ENCODE measurements at regions of chr12 and their contacts with region 1.

Region 1: DNA sequence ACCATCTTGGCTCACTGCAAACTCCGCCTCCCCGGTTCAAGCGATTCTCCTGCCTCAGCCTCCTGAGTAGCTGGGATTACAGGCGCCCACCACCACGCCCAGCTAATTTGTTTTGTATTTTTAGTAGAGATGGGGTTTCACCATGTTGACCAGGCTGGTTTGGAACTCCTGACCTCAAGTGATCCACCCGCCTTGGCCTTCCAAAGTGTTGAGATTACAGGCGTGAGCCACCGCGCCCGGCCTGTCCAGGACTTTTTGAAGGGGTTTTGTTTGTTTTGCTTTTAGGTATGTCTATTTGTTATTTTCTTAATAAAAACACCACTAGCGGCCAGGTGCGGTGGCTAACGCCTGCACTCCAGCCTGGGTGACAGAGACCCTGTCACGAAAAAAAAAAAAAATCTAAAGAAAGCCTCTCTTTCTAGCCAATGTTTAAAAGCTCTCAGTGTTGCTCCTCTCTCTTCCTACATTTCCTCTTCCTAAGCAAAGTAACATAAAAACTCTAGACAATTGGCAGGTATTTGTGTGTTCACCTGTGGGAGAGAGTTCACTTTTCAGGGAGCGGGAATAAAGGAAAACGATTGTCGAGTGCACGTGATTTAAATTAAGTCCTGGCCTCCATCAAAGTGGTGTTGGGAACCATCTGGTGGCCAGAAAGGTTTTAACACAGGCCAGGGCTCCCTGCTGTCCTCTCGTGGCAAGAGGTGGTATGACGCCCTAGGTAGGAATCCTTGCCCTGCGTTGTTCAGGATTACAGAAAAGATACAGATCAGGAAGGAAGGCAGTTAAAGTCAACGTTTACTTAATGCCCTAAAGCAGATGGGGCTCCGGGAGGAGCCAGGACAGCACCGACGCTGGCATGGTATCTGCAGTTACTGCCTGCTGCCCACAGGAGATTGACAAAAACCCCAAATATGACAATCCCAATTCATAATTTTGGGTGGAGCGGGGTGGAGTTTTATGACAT is 36.2 kb upstream of the ATP23 start:
- DNase-seq: peak; percentile 91
- ATAC-seq: peak; percentile 98
- H3K4me3 Mint-ChIP-seq: peak overlapping the region; percentile 37
- H3K27ac Mint-ChIP-seq: no peak overlapping the region
- H3K4me1 Mint-ChIP-seq: peaks cover 3% of the 10 kb centered on the region
- H3K27me3 Mint-ChIP-seq: peaks cover 7% of the 10 kb centered on the region

Region 2: GRCh38 chr12:57500213-57500612 is 404.9 kb before region 1 on chr12:
- CTCF ChIA-PET with region 1: no interaction called
- POLR2A ChIA-PET with region 1: no interaction called
- intact Hi-C with region 1: no loop called
- DNase-seq: no peak
- ATAC-seq: no peak
- H3K4me3 Mint-ChIP-seq: no peak overlapping the region
- H3K27ac Mint-ChIP-seq: no peak overlapping the region
- H3K4me1 Mint-ChIP-seq: peaks cover 9% of the 10 kb centered on the region
- H3K27me3 Mint-ChIP-seq: no peaks in the 10 kb centered on the region

Region 3: DNA sequence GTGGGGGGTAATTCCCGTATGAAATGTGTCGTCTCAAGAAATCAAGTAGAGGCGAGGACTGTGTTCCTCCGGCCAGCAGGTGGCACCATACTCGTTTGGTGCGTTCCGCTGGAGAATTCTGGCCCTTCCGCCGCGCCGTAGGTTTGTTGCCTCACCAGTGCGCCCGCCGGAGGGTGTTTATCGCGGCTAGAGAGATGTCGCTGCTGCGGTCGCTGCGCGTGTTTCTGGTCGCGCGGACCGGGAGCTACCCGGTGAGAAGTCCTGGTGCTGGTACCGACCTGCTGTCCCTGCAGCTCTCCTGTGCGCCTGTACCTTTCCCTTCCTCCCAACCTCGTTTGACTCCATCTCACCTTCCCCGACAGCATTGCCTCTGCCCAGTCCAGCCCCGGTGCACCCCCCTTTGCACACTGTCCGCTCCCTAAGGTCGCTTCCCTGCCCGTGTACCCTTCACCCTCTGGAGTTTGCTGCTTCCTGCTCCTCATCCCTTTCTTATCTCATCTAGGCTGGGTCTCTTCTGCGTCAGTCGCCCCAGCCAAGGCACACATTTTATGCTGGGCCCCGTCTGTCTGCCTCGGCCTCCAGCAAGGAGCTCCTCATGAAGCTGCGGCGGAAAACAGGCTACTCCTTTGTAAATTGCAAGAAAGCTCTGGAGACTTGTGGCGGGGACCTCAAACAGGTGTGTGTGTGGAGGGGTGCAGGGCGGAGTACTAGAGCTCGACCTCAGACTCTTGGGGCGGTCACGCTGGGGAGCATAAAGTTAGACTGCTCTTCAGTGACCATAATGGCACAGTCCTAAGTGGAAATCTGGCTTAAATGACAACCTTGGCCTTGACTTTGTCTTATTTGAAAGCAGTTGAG is 122.3 kb before region 1 on chr12 and contains the start of gene TSFM:
- CTCF ChIA-PET with region 1: interaction called, 8 read pairs
- POLR2A ChIA-PET with region 1: interaction called, 6 read pairs
- intact Hi-C with region 1: loop called (anchors 1 kb)
- DNase-seq: peak; percentile 99
- ATAC-seq: peak; percentile 93
- H3K4me3 Mint-ChIP-seq: peak within 1 kb of the TSS; percentile 98
- H3K27ac Mint-ChIP-seq: peak within 1 kb of the TSS; percentile 98
- H3K4me1 Mint-ChIP-seq: peaks cover 35% of the 10 kb centered on the region
- H3K27me3 Mint-ChIP-seq: no peaks in the 10 kb centered on the region
- total RNA-seq, gene TSFM: 30.7 to 56.9 TPM

Region 4: GRCh38 chr12:57803319-57803893 is 101.7 kb before region 1 on chr12:
- CTCF ChIA-PET with region 1: interaction called, 51 read pairs
- POLR2A ChIA-PET with region 1: no interaction called
- intact Hi-C with region 1: loop called (anchors 1 kb)
- DNase-seq: peak; percentile 60
- ATAC-seq: peak; percentile 70
- H3K4me3 Mint-ChIP-seq: no peak overlapping the region
- H3K27ac Mint-ChIP-seq: no peak overlapping the region
- H3K4me1 Mint-ChIP-seq: no peaks in the 10 kb centered on the region
- H3K27me3 Mint-ChIP-seq: no peaks in the 10 kb centered on the region

Region 5: DNA sequence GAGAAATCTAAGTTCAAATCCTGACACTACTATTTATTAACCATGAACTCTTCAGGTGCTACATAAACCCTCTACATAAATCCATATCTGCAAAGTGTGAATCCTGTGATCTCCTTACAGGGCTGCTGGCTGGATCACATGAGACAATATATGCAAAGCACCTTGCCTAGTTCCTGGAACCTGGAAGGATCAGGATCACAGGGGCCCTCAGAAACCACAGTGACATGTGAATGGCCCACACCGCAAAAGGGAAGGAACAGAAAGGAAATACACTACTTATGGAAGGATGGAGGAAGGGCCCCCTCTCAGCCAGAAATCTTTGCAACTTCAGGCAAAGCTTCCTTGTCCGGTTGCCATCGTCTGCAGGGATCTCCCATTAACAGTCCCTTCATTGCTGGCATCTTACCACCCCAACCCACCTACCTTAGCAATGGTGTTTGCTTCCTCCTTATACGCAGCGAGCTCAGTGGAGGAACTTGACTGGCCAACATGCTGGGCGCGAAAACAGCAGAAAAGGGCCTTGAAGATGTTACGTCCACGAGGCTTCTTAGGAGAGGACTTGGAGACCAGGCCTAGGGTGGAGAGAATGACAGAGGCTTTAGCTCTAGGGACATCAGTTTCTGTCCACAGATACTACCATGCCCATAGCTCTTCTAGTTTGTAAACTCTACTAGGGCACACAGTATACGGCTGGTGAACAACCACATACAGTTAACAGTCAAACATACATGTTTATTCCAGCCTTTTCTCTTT is 75.9 kb before region 1 on chr12:
- CTCF ChIA-PET with region 1: interaction called, 54 read pairs
- POLR2A ChIA-PET with region 1: interaction called, 4 read pairs
- intact Hi-C with region 1: loop called (anchors 1 kb)
- DNase-seq: no peak
- ATAC-seq: no peak
- H3K4me3 Mint-ChIP-seq: no peak overlapping the region
- H3K27ac Mint-ChIP-seq: peak overlapping the region; percentile 68
- H3K4me1 Mint-ChIP-seq: peaks cover 44% of the 10 kb centered on the region
- H3K27me3 Mint-ChIP-seq: no peaks in the 10 kb centered on the region

Region 6: DNA sequence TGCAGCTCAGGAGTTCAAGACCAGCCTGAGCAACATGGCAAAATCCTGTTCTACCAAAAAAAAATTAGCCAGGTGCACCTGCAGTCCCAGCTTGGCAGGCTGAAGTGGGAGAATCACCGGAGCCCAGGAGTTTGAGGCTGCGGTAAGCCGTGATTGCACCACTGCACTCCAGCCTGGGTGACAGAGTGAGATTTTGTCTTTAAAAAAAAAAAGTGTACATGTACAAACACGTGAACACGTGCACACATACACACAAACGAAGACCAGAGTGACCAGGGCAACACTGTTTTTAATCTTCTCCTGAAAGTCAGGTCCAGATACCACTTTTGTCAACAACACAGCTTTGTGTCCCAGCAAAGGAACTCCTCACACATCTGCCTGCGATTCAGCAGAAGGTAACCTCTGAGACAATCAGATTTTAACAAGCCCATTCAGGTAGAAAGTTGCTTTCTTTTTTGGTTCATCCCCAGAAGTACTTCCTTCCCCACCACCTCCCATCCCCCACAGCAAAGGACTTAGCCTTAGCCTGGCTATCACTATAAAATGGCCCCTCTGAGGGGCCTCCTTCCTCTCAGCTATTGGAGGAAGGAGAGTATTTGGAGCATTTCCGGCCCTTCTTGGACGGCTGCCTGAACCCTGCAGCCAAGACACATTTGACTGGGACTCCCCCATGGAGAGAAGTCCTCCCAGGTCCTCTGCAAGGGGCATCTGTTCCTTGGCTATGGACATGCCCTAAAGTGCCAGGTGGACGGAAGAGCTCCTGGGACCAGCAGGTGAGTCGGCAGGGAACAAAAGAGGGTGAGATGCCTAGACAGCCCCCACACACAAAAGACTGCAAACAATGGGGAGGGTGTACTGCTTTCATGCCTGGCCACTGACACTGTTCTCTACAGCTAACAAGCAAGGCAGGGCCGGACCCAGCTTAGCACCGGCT is 68.4 kb before region 1 on chr12:
- CTCF ChIA-PET with region 1: interaction called, 57 read pairs
- POLR2A ChIA-PET with region 1: interaction called, 4 read pairs
- intact Hi-C with region 1: loop called (anchors 1 kb)
- DNase-seq: peak; percentile 68
- ATAC-seq: peak; percentile 51
- H3K4me3 Mint-ChIP-seq: peak overlapping the region; percentile 49
- H3K27ac Mint-ChIP-seq: peak overlapping the region; percentile 85
- H3K4me1 Mint-ChIP-seq: peaks cover 94% of the 10 kb centered on the region
- H3K27me3 Mint-ChIP-seq: no peaks in the 10 kb centered on the region

Region 7: GRCh38 chr12:57865090-57865751 is 39.9 kb before region 1 on chr12:
- CTCF ChIA-PET with region 1: interaction called, 10 read pairs
- POLR2A ChIA-PET with region 1: interaction called, 10 read pairs
- intact Hi-C with region 1: no loop called
- DNase-seq: peak; percentile 84
- ATAC-seq: peak; percentile 96
- H3K4me3 Mint-ChIP-seq: peak overlapping the region; percentile 66
- H3K27ac Mint-ChIP-seq: peak overlapping the region; percentile 74
- H3K4me1 Mint-ChIP-seq: peaks cover 7% of the 10 kb centered on the region
- H3K27me3 Mint-ChIP-seq: peaks cover 2% of the 10 kb centered on the region

Region 8: GRCh38 chr12:57935839-57936512 is 30.8 kb after region 1 on chr12:
- CTCF ChIA-PET with region 1: interaction called, 3 read pairs
- POLR2A ChIA-PET with region 1: no interaction called
- intact Hi-C with region 1: loop called in 1 of 2 experiments (anchors 2 kb)
- DNase-seq: peak; percentile 95
- ATAC-seq: peak; percentile 92
- H3K4me3 Mint-ChIP-seq: peak overlapping the region; percentile 95
- H3K27ac Mint-ChIP-seq: peak overlapping the region; percentile 97
- H3K4me1 Mint-ChIP-seq: peaks cover 29% of the 10 kb centered on the region
- H3K27me3 Mint-ChIP-seq: no peaks in the 10 kb centered on the region

Region 9: GRCh38 chr12:58029260-58029659 is 124.1 kb after region 1 on chr12:
- CTCF ChIA-PET with region 1: no interaction called
- POLR2A ChIA-PET with region 1: no interaction called
- intact Hi-C with region 1: no loop called
- DNase-seq: no peak
- ATAC-seq: no peak
- H3K4me3 Mint-ChIP-seq: no peak overlapping the region
- H3K27ac Mint-ChIP-seq: no peak overlapping the region
- H3K4me1 Mint-ChIP-seq: no peaks in the 10 kb centered on the region
- H3K27me3 Mint-ChIP-seq: peaks cover 2% of the 10 kb centered on the region

Measured in activated CD4-positive, alpha-beta T cell treated with anti-CD3 and anti-CD28 coated beads for 36 hours (primary cell).